ENCODE measurements at regions of chr7 and their contacts with region 1.

Region 1: DNA sequence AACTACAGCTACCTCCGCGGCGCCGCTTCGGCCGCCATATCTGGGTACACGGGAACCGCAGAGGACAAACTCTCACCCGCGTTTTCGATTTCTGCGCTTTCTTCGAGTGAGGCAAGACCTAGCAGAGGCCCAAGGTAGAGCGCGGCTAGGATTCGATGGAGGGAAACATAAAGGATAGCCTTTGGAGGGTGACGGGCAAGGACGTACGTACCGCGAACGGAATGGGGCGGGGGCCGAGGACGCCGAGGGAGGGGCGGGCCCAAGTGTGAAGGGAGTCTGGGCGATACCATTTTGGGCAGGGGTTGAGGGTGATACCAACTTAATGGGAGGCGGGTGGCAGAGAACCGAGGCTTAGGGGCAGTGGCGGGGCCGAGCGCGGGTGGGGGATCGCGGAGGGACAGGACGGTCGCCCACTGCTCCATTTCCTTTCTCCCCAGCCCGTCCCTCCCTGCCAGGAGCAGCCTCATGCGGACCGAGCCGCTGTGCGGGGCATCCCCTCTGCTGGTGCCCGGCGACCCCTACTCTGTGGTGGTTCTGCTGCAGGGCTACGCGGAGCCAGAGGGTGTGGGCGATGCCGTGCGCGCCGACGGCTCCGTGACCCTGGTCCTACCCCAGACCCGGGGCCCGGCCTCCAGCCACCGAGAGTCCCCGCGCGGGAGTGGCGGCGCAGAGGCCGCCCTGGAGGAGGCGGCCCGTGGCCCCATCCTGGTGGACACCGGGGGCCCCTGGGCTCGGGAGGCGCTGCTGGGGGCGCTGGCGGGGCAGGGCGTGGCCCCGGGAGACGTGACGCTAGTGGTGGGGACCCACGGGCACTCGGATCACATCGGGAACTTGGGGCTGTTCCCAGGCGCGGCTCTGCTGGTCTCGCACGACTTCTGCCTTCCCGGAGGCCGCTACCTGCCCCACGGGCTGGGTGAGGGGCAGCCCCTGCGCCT is at the start of gene MBLAC1:
- DNase-seq: peak; percentile 85
- H3K4me3 Mint-ChIP-seq: peak within 1 kb of the TSS; percentile 94
- H3K27ac Mint-ChIP-seq: peak within 1 kb of the TSS; percentile 95
- H3K4me1 Mint-ChIP-seq: peaks cover 20% of the 10 kb centered on the region
- H3K27me3 Mint-ChIP-seq: no peaks in the 10 kb centered on the region
- total RNA-seq, gene MBLAC1: 4.1 and 5.5 TPM in 2 replicates

Region 2: DNA sequence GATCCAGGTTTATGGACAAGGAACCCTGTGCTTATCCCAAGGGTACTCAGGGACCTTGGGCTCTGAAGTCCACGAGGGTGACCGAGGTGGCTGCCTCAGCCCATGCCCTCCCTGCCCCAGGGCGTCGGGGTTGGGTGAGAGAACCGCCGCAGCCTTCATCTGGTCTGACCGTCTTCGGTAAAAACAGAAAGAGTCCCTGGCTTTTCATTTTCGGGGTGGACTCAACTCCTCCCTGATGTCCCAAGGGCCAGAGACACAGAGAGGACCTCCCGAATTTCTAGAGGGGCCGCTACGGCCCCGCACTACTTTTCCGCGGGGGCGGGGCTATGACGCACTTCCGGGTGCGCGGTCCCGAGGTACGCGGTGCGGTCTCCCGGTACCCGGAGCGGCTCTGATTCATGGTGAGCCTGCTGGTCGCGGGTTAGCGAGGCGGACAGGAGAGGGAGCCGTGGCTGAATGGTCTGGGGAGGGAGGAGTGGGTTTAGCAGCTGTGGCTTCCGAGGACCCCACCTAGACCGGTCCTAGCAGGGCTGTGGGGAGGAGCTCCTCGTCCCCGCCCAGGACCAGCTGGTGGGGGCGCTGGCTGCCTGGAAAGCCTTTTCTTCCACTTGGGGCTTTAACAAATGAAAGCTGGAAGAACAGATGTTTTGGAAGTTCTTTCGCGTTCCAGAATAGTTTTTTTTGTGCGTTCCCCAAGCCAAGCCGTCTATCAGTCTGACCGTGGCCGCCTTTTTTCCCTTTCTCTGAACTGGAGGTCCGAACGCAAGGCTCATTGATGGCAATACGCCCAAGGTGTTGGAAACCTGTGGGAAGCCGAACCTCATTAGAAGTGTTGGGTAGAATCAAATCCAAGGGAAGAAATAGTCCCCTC is 77.5 kb before region 1 on chr7 and contains the start of gene ZSCAN21:
- intact Hi-C with region 1: loop called (anchors 2 kb)
- DNase-seq: peak; percentile 79
- H3K4me3 Mint-ChIP-seq: peak within 1 kb of the TSS; percentile 88
- H3K27ac Mint-ChIP-seq: peak within 1 kb of the TSS; percentile 92
- H3K4me1 Mint-ChIP-seq: peaks cover 13% of the 10 kb centered on the region
- H3K27me3 Mint-ChIP-seq: peaks cover 2% of the 10 kb centered on the region
- total RNA-seq, gene ZSCAN21: 6.8 and 9.8 TPM in 2 replicates

Region 3: DNA sequence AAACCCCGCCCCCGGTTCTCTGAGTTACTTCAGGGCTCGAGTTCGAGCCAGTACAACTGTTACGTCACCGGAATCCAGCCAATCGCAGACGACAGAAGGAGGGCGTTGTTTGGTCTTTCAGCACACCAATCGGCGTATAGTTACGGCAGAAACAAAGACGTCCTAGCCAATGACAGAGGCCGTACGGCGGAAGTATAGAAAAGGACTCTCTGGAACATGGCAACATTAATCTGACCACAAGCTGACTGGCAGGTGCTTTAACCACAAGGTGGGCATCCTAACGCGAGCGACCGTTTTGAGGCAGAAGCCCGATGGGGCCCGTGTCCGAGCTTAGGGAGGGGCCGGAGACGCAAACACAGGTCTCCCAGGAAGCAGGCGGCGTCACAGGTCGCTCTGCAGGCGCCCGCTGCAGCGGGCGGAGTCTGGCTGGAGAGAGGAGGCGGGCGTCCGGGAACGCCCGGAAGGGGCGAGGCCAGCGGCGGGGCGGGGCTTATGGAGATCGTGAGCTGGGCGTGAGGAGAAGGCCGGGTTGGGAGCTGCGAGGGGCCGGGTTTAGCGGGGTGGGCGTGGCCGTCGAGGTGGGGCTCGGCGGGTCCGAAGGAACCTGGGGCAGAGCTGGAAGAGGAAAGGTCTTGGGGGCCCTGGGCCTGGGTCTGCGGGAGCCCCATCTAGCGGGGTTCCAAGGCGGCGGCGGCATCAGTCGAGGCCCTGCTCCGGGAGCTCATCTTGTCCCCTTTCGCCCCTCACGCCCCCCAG is 485.0 kb after region 1 on chr7 and contains the start of gene MOSPD3:
- intact Hi-C with region 1: no loop called
- DNase-seq: peak; percentile 97
- H3K4me3 Mint-ChIP-seq: peak within 1 kb of the TSS; percentile 98
- H3K27ac Mint-ChIP-seq: peak within 1 kb of the TSS; percentile 100
- H3K4me1 Mint-ChIP-seq: peaks cover 22% of the 10 kb centered on the region
- H3K27me3 Mint-ChIP-seq: peaks cover 8% of the 10 kb centered on the region
- total RNA-seq, gene MOSPD3: 10.3 and 11.5 TPM in 2 replicates